ENCODE measurements at regions of chr11 and their contacts with region 1.

Region 1: DNA sequence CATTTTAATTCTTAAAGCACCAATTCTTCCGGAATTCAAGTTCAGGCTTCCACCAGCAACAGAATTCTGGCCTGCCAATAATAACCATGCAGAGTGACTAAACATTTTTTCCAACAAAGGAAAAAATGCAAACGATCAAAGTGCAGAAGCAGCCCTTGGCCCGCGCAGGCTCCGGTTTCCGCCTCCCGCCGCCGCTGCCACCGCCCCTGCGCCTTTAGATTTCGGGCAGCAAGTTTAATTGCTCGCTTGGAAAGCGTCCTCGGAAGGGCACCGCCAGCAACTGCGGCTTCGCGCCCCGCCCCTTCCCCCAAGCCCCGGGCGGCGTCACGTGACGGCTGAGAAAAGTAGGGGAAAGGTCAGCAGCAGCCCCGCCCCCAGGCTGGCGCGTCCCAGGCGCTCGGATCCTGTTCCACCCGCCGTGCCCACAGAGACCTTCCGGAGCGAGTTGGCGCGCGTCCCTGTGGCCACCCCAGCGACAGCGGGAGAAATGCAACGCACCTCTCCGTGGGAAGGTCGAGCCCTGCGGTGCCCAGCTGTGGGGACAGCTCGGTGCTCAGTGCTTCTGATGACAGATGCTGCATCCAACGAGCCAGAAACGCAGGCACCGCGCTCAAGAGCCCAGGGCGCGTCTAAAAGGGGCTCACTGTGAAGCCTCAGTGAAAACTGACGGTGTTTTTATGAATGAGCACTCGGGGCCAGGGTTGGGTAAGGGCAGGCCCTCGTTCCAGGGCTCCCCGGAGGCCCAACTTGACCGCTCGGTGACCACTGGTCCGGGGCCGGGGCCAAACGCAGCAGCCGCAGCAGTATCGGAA is 2.5 kb downstream of the CPT1A start:
- DNase-seq: peak; percentile 87 to 98 (median 95)
- ATAC-seq: peak; percentile 64
- H3K4me3 ChIP-seq: peak overlapping the region; percentile 63 to 70
- H3K4me3 Mint-ChIP-seq: peak overlapping the region; percentile 85
- H3K27ac ChIP-seq: peak overlapping the region; percentile 60 to 92
- H3K27ac Mint-ChIP-seq: peak overlapping the region; percentile 93
- H3K4me1 ChIP-seq: peaks cover 59% of the 10 kb centered on the region
- H3K4me1 Mint-ChIP-seq: peaks cover 66% of the 10 kb centered on the region
- H3K27me3 ChIP-seq: no peaks in the 10 kb centered on the region
- H3K27me3 Mint-ChIP-seq: no peaks in the 10 kb centered on the region
- CTCF ChIP-seq: no peak

Region 2: GRCh38 chr11:68213555-68214174 is 625.6 kb before region 1 on chr11:
- CTCF ChIA-PET with region 1: no interaction called
- POLR2A ChIA-PET with region 1: no interaction called
- intact Hi-C with region 1: loop called in 1 of 2 experiments (anchors 5 kb)
- DNase-seq: peak; percentile 67 to 96 (median 79)
- ATAC-seq: peak; percentile 33
- H3K4me3 ChIP-seq: peak overlapping the region; percentile 79 to 89
- H3K4me3 Mint-ChIP-seq: peak overlapping the region; percentile 81
- H3K27ac ChIP-seq: peak overlapping the region; percentile 55 to 58
- H3K27ac Mint-ChIP-seq: peak overlapping the region; percentile 90
- H3K4me1 ChIP-seq: peaks cover 41% of the 10 kb centered on the region
- H3K4me1 Mint-ChIP-seq: peaks cover 46% of the 10 kb centered on the region
- H3K27me3 ChIP-seq: no peaks in the 10 kb centered on the region
- H3K27me3 Mint-ChIP-seq: peaks cover 2% of the 10 kb centered on the region
- CTCF ChIP-seq: no peak

Region 3: DNA sequence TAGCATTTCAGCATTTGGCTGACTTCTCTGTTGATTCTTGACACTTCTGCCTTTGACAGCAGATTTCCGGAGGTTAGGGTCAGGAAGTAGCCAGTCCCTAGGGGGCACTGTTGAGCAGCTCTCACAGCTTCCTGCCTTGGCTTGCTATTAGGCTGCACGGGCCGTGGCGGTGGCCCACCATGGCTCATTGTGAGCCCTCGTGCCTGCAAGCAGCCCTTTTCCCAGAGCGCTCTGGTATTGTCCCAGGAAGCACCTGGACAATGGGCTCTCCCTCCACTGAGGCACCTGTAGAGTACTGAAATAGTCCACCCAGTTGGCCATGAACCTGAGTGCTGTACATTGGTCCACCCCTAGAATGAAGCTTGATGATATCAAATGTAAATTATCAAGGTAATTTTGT is 255.2 kb before region 1 on chr11:
- CTCF ChIA-PET with region 1: interaction called, 5 read pairs
- POLR2A ChIA-PET with region 1: no interaction called
- intact Hi-C with region 1: loop called in 1 of 2 experiments (anchors 10 kb)
- DNase-seq: peak; percentile 22 to 71 (median 58)
- ATAC-seq: peak; percentile 75
- H3K4me3 ChIP-seq: no peak overlapping the region
- H3K4me3 Mint-ChIP-seq: no peak overlapping the region
- H3K27ac ChIP-seq: no peak overlapping the region
- H3K27ac Mint-ChIP-seq: no peak overlapping the region
- H3K4me1 ChIP-seq: no peaks in the 10 kb centered on the region
- H3K4me1 Mint-ChIP-seq: peaks cover 5% of the 10 kb centered on the region
- H3K27me3 ChIP-seq: no peaks in the 10 kb centered on the region
- H3K27me3 Mint-ChIP-seq: no peaks in the 10 kb centered on the region
- CTCF ChIP-seq: peak; percentile 69

Region 4: GRCh38 chr11:68763926-68764639 is 75.2 kb before region 1 on chr11:
- CTCF ChIA-PET with region 1: no interaction called
- POLR2A ChIA-PET with region 1: no interaction called
- intact Hi-C with region 1: no loop called
- DNase-seq: no peak
- ATAC-seq: no peak
- H3K4me3 ChIP-seq: no peak overlapping the region
- H3K4me3 Mint-ChIP-seq: no peak overlapping the region
- H3K27ac ChIP-seq: no peak overlapping the region
- H3K27ac Mint-ChIP-seq: no peak overlapping the region
- H3K4me1 ChIP-seq: no peaks in the 10 kb centered on the region
- H3K4me1 Mint-ChIP-seq: no peaks in the 10 kb centered on the region
- H3K27me3 ChIP-seq: no peaks in the 10 kb centered on the region
- H3K27me3 Mint-ChIP-seq: no peaks in the 10 kb centered on the region
- CTCF ChIP-seq: no peak

Region 5: GRCh38 chr11:68798221-68798813 is 40.9 kb before region 1 on chr11:
- CTCF ChIA-PET with region 1: interaction called, 47 read pairs
- POLR2A ChIA-PET with region 1: no interaction called
- intact Hi-C with region 1: loop called in 1 of 2 experiments (anchors 2 kb)
- DNase-seq: peak in 8 of 9 experiments; percentile 16 to 62 (median 50)
- ATAC-seq: peak; percentile 31
- H3K4me3 ChIP-seq: no peak overlapping the region
- H3K4me3 Mint-ChIP-seq: no peak overlapping the region
- H3K27ac ChIP-seq: no peak overlapping the region
- H3K27ac Mint-ChIP-seq: no peak overlapping the region
- H3K4me1 ChIP-seq: no peaks in the 10 kb centered on the region
- H3K4me1 Mint-ChIP-seq: no peaks in the 10 kb centered on the region
- H3K27me3 ChIP-seq: no peaks in the 10 kb centered on the region
- H3K27me3 Mint-ChIP-seq: no peaks in the 10 kb centered on the region
- CTCF ChIP-seq: peak; percentile 76

Region 6: GRCh38 chr11:68825571-68825970 is 13.7 kb before region 1 on chr11:
- CTCF ChIA-PET with region 1: interaction called, 75 read pairs
- POLR2A ChIA-PET with region 1: interaction called, 11 read pairs
- intact Hi-C with region 1: loop called (anchors 1 kb)
- DNase-seq: peak in 8 of 9 experiments; percentile 54 to 75 (median 67)
- ATAC-seq: peak; percentile 91
- H3K4me3 ChIP-seq: no peak overlapping the region
- H3K4me3 Mint-ChIP-seq: no peak overlapping the region
- H3K27ac ChIP-seq: no peak overlapping the region
- H3K27ac Mint-ChIP-seq: peak overlapping the region; percentile 32
- H3K4me1 ChIP-seq: peaks cover 35% of the 10 kb centered on the region
- H3K4me1 Mint-ChIP-seq: peaks cover 48% of the 10 kb centered on the region
- H3K27me3 ChIP-seq: no peaks in the 10 kb centered on the region
- H3K27me3 Mint-ChIP-seq: no peaks in the 10 kb centered on the region
- CTCF ChIP-seq: peak; percentile 21

Region 7: GRCh38 chr11:69048718-69049489 is 209.6 kb after region 1 on chr11 and contains the start of gene TPCN2:
- CTCF ChIA-PET with region 1: no interaction called
- POLR2A ChIA-PET with region 1: no interaction called
- intact Hi-C with region 1: loop called (anchors 1 to 2 kb)
- DNase-seq: peak; percentile 79 to 98 (median 89)
- ATAC-seq: peak; percentile 98
- H3K4me3 ChIP-seq: peak within 1 kb of the TSS; percentile 61 to 70
- H3K4me3 Mint-ChIP-seq: peak within 1 kb of the TSS; percentile 79
- H3K27ac ChIP-seq: peak within 1 kb of the TSS; percentile 74 to 91
- H3K27ac Mint-ChIP-seq: peak within 1 kb of the TSS; percentile 92
- H3K4me1 ChIP-seq: peaks cover 9% of the 10 kb centered on the region
- H3K4me1 Mint-ChIP-seq: peaks cover 28% of the 10 kb centered on the region
- H3K27me3 ChIP-seq: no peaks in the 10 kb centered on the region
- H3K27me3 Mint-ChIP-seq: no peaks in the 10 kb centered on the region
- CTCF ChIP-seq: no peak
- total RNA-seq, gene TPCN2: 13.1 to 15.0 TPM

Region 8: DNA sequence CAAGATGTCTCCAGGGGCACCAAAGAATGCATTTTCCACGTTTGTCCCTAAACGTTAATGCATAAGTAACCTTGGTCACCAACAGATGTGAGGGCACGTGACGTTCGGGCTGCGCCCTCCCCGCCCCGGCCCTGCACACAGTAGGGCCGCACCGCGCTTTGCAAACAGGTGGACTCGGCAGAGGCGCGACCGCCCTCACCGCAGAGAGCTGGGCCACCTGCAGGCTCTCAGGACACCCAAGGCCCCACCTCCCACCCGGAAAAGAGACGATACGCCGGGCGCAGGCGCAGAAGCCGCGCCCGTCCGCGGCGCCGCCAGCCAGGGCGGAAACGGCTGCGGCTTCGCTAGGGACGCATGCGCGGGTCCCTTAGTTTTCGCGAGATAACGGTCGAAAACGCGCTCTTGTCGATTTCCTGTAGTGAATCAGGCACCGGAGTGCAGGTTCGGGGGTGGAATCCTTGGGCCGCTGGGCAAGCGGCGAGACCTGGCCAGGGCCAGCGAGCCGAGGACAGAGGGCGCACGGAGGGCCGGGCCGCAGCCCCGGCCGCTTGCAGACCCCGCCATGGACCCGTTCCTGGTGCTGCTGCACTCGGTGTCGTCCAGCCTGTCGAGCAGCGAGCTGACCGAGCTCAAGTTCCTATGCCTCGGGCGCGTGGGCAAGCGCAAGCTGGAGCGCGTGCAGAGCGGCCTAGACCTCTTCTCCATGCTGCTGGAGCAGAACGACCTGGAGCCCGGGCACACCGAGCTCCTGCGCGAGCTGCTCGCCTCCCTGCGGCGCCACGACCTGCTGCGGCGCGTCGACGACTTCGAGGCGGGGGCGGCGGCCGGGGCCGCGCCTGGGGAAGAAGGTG is 1363.9 kb after region 1 on chr11 and contains the start of gene FADD:
- CTCF ChIA-PET with region 1: no interaction called
- POLR2A ChIA-PET with region 1: no interaction called
- intact Hi-C with region 1: loop called in 1 of 2 experiments (anchors 5 kb)
- DNase-seq: peak; percentile 82 to 97 (median 91)
- ATAC-seq: peak; percentile 56
- H3K4me3 ChIP-seq: peak within 1 kb of the TSS; percentile 81 to 97
- H3K4me3 Mint-ChIP-seq: peak within 1 kb of the TSS; percentile 92
- H3K27ac ChIP-seq: peak within 1 kb of the TSS; percentile 92 to 95
- H3K27ac Mint-ChIP-seq: peak within 1 kb of the TSS; percentile 98
- H3K4me1 ChIP-seq: peaks cover 34% of the 10 kb centered on the region
- H3K4me1 Mint-ChIP-seq: peaks cover 45% of the 10 kb centered on the region
- H3K27me3 ChIP-seq: no peaks in the 10 kb centered on the region
- H3K27me3 Mint-ChIP-seq: no peaks in the 10 kb centered on the region
- CTCF ChIP-seq: no peak
- total RNA-seq, gene FADD: 10.5 to 11.0 TPM

Measured in CD8-positive, alpha-beta T cell (primary cell).